Calu3 (cell line): ENCODE measurements at regions of chrX and their contacts with region 1.

Region 1: DNA sequence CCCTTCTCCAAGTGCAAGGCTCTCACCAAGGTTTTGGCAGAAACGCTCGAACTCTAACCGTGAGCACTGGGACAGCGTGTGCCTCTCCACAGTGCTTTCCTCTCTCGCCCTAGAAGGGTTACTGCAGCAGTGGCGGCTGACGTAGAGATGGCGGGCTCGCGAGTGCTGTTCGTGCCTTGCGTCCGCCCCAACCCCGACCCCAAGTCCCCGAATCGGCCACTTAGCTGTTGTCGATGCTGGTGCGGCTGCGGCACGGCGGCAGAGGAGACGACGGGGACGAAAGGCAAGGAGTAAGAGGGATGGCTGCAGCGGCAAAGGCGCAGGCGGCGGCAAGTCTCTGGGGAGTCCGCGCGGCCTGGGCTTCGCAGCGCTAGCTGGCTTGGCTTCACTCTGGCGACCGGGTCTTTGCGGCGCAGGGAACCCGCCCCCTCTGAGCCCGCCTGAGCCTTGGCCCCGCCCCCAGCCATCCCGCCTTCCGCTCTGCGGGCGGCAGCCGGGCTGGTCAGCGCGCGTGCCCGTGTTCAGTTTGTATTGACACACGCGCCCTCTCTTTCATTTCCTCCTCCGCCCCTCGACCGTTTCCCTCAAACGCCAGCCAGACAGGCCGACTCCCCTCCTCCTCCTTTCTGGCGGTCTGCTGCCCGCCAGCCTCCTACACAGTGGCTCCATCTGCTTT is at the start of gene SPIN4:
- DNase-seq: peak; percentile 91
- H3K4me3 Mint-ChIP-seq: peak within 1 kb of the TSS; percentile 96
- H3K27ac Mint-ChIP-seq: peak within 1 kb of the TSS; percentile 93
- H3K4me1 Mint-ChIP-seq: peaks cover 15% of the 10 kb centered on the region
- H3K27me3 Mint-ChIP-seq: no peaks in the 10 kb centered on the region
- CTCF ChIP-seq: no peak
- total RNA-seq, gene SPIN4: 17.2 and 18.4 TPM in 2 replicates

Region 2: GRCh38 chrX:62931625-62932024 is 419.5 kb before region 1 on chrX:
- CTCF ChIA-PET with region 1: no interaction called
- intact Hi-C with region 1: no loop called
- DNase-seq: no peak
- H3K4me3 Mint-ChIP-seq: no peak overlapping the region
- H3K27ac Mint-ChIP-seq: no peak overlapping the region
- H3K4me1 Mint-ChIP-seq: no peaks in the 10 kb centered on the region
- H3K27me3 Mint-ChIP-seq: no peaks in the 10 kb centered on the region
- CTCF ChIP-seq: no peak

Region 3: GRCh38 chrX:63421411-63421810 is 70.3 kb after region 1 on chrX:
- CTCF ChIA-PET with region 1: no interaction called
- intact Hi-C with region 1: loop called (anchors 10 kb)
- DNase-seq: no peak
- H3K4me3 Mint-ChIP-seq: no peak overlapping the region
- H3K27ac Mint-ChIP-seq: no peak overlapping the region
- H3K4me1 Mint-ChIP-seq: peaks cover 11% of the 10 kb centered on the region
- H3K27me3 Mint-ChIP-seq: no peaks in the 10 kb centered on the region
- CTCF ChIP-seq: no peak

Region 4: DNA sequence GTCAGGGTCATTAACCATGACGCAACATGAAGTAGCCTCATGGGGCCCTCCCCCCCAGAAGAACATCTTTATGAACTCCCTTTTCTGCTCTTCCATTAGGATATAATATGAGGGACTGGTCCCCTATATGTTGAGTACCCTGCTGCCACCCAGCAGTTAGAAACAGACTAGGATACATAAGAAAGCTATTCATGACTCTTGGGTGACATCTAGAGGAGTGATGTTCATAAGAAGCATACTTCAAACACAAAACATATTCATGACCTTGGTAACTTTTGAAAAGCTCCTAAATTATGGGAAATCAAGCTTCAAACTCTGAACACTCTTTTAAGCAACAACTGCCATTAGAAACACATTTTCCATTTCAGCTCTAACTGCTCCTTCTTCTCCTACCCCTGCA is 155.2 kb after region 1 on chrX:
- CTCF ChIA-PET with region 1: no interaction called
- intact Hi-C with region 1: loop called (anchors 5 kb)
- DNase-seq: no peak
- H3K4me3 Mint-ChIP-seq: no peak overlapping the region
- H3K27ac Mint-ChIP-seq: no peak overlapping the region
- H3K4me1 Mint-ChIP-seq: peaks cover 8% of the 10 kb centered on the region
- H3K27me3 Mint-ChIP-seq: no peaks in the 10 kb centered on the region
- CTCF ChIP-seq: no peak

Region 5: DNA sequence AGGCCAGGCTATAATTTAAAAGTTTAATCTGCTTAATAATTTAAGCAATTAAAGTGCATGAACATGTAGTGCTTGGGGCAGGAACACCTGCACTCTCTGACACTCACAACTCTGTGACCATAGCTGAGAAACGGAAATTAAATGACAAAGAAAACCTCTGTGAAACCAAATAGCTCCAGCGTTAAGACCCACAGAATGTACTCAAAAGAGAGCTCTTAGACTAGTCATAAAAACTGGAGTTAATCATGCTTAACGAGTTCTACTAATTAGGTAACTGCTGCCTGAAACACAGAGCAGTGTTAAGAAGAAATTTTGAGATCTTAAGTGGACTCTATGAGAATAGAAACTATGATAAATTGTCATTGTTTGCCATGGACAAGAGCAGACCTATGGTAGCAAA is 174.4 kb after region 1 on chrX:
- CTCF ChIA-PET with region 1: no interaction called
- intact Hi-C with region 1: no loop called
- DNase-seq: no peak
- H3K4me3 Mint-ChIP-seq: no peak overlapping the region
- H3K27ac Mint-ChIP-seq: no peak overlapping the region
- H3K4me1 Mint-ChIP-seq: no peaks in the 10 kb centered on the region
- H3K27me3 Mint-ChIP-seq: no peaks in the 10 kb centered on the region
- CTCF ChIP-seq: no peak

Region 6: DNA sequence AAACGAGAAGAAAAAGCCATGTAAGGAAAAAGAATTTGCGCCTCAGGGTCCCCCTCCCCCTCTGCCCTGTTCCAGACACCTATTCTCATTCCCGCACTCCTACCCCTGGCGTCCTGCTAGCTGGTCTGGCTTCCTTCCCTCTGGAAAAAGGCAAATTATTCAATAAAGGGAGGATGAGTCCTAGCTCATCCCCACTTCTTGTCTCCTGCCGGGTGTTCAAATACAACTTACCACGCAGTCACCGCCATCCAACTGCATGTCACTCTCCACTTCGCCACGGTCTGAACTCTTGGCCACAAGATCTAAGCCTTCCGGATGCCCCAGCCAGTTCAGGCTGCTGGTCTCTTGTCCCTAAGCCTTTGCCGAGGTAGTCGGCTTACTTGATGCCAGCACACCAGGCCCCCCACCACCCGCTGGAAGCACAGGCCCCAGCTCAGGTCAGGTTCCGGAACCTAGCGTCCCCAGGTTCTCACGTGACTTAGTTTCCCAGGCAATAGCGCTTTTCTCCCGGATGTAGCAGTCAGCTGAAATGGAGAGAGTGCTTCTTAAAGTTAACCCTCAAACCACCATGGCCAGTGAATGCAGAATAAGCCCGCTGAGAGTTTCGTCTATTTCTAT is 209.6 kb after region 1 on chrX:
- CTCF ChIA-PET with region 1: no interaction called
- intact Hi-C with region 1: loop called (anchors 5 kb)
- DNase-seq: peak; percentile 58
- H3K4me3 Mint-ChIP-seq: peak overlapping the region; percentile 97
- H3K27ac Mint-ChIP-seq: peak overlapping the region; percentile 86
- H3K4me1 Mint-ChIP-seq: no peaks in the 10 kb centered on the region
- H3K27me3 Mint-ChIP-seq: no peaks in the 10 kb centered on the region
- CTCF ChIP-seq: no peak